BJ (cell line): ENCODE measurements at regions of chr17 and their contacts with region 1.

Region 1: GRCh38 chr17:44141717-44142285 is at the start of gene HROB:
- DNase-seq: peak; percentile 66
- H3K4me3 ChIP-seq: peak within 1 kb of the TSS; percentile 94
- H3K27me3 ChIP-seq: no peaks in the 10 kb centered on the region
- CTCF ChIP-seq: peak; percentile 93
- polyA plus RNA-seq, gene HROB: 2.1 and 3.4 TPM in 2 replicates

Region 2: DNA sequence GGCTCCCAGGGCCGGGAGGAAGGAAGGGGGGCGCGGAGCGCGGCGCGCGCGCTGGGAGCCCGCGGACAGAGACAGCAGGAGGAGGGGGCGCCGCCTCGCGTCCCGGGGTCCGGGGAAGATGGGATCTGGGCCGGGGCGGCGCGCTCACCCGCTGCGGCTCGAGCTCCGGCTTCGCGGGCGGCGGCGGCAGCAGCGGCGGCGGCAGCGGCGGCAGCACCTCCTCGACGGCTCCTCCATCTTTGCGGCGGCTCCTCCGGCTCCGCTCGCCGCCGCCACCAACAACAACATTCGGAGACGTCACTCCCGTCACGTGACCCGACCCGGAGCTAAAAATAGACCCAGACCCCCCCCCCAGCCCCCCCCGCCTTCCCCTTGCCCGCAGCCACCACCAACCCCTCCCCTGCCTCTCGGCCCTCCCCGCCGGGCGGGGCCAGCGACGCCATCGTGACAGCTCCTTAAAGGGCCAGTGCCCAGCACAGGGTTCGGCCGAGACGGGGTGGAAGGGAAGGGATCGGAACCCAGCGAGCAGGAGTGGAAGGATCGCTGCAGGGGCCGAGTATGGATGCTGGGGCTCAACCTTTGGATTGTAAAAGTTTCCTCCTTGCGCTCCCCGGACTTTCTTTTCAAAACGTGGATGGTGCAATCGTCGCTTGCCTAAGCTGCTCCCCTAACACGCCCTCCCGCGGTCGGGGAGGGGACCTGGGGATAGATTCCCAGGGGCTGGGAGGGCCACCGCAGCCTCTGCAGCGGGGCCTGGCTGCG is 18.3 kb before region 1 on chr17 and contains the start of gene HDAC5:
- CTCF ChIA-PET with region 1: interaction called, 5 read pairs
- POLR2A ChIA-PET with region 1: interaction called, 12 read pairs
- DNase-seq: peak; percentile 53
- H3K4me3 ChIP-seq: peak within 1 kb of the TSS; percentile 95
- H3K27me3 ChIP-seq: no peaks in the 10 kb centered on the region
- CTCF ChIP-seq: peak; percentile 74
- polyA plus RNA-seq, gene HDAC5: 46.4 and 102 TPM in 2 replicates

Region 3: GRCh38 chr17:44159519-44160210 is 17.9 kb after region 1 on chr17:
- CTCF ChIA-PET with region 1: interaction called, 11 read pairs
- POLR2A ChIA-PET with region 1: no interaction called
- DNase-seq: no peak
- H3K4me3 ChIP-seq: no peak overlapping the region
- H3K27me3 ChIP-seq: no peaks in the 10 kb centered on the region
- CTCF ChIP-seq: no peak

Region 4: DNA sequence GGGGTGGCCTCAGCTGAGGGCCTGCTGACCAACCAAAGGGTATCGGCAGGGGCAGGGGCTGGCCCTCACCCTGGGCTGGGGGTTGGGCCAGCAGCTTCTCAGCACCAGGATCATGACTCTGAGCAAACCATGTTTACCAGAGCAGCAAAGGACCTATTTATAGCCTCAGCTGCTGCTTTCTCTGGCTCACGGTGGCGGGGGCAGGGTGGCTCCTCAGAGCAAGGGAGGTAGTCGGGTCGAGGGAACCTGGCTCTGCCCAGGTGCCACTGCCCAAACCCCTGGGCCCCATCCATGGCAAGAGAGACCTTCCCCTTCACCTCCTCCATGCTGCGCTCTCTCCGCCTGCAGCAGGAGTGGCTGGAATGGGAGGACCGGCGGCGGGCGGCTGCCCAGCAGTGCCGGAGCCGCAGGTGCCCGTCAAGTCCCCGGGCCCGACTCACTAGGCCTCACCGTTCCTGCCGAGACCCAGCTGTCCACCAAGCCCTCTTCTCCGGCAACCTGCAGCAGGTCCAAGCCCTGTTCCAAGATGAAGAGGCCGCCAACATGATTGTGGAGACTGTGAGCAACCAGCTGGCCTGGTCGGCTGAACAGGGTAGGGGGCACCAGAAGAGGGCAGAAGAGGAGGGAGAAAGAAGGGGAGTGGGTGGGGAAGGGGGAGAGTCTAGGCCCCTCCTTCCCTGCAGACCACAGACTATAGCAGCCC is 28.8 kb after region 1 on chr17 and contains the start of gene ASB16:
- CTCF ChIA-PET with region 1: interaction called, 13 read pairs
- POLR2A ChIA-PET with region 1: interaction called, 5 read pairs
- DNase-seq: no peak
- H3K4me3 ChIP-seq: no peak within 1 kb of the TSS
- H3K27me3 ChIP-seq: no peaks in the 10 kb centered on the region
- CTCF ChIP-seq: no peak
- polyA plus RNA-seq, gene ASB16: 0.04 TPM in 1 of 2 replicates, not detected in the other

Region 5: GRCh38 chr17:44186307-44187130 is 44.7 kb after region 1 on chr17 and contains the start of gene TMUB2:
- CTCF ChIA-PET with region 1: no interaction called
- POLR2A ChIA-PET with region 1: interaction called, 13 read pairs
- DNase-seq: peak; percentile 99
- H3K4me3 ChIP-seq: peak within 1 kb of the TSS; percentile 99
- H3K27me3 ChIP-seq: no peaks in the 10 kb centered on the region
- CTCF ChIP-seq: no peak
- polyA plus RNA-seq, gene TMUB2: 43.8 and 64.0 TPM in 2 replicates